A673 (cell line): ENCODE measurements at regions of chr10 and their contacts with region 1.

Region 1: DNA sequence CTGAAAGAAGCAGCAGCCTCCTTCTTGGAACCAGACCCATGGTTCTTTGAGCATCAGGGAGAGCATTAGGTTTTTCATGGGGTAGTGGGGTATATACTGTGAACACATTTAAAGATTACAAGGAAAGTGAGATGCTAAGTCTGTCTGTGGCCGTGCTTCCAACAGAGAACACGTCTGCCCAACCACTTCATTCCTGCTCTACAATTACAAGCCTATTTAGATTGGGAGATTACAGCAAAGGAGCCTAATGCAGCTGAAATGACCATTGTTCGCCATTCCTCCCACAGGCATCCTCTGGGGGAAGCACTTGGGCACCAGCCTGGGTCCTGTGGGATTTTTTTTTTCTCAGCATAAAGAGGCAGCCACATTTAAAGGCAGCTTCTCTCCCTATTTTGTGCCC is 536.4 kb downstream of the XPNPEP1 start:
- DNase-seq: peak; percentile 88
- H3K4me3 ChIP-seq: no peak overlapping the region
- H3K27ac ChIP-seq: peak overlapping the region; percentile 94
- H3K4me1 ChIP-seq: peaks cover 38% of the 10 kb centered on the region
- H3K27me3 ChIP-seq: no peaks in the 10 kb centered on the region
- CTCF ChIP-seq: 0 out of 2 replicates have a peak, but pooled peaks have one; percentile 16

Region 2: GRCh38 chr10:109317746-109318366 is 69.1 kb before region 1 on chr10:
- CTCF ChIA-PET with region 1: no interaction called
- POLR2A ChIA-PET with region 1: no interaction called
- intact Hi-C with region 1: no loop called
- DNase-seq: no peak
- H3K4me3 ChIP-seq: no peak overlapping the region
- H3K27ac ChIP-seq: no peak overlapping the region
- H3K4me1 ChIP-seq: no peaks in the 10 kb centered on the region
- H3K27me3 ChIP-seq: no peaks in the 10 kb centered on the region
- CTCF ChIP-seq: no peak

Region 3: GRCh38 chr10:109427411-109427810 is 40.5 kb after region 1 on chr10:
- CTCF ChIA-PET with region 1: no interaction called
- POLR2A ChIA-PET with region 1: no interaction called
- intact Hi-C with region 1: loop called (anchors 2 kb)
- DNase-seq: peak; percentile 84
- H3K4me3 ChIP-seq: no peak overlapping the region
- H3K27ac ChIP-seq: peak overlapping the region; percentile 75
- H3K4me1 ChIP-seq: peaks cover 82% of the 10 kb centered on the region
- H3K27me3 ChIP-seq: no peaks in the 10 kb centered on the region
- CTCF ChIP-seq: peak; percentile 68

Region 4: GRCh38 chr10:109450702-109451101 is 63.8 kb after region 1 on chr10:
- CTCF ChIA-PET with region 1: interaction called, 3 read pairs
- POLR2A ChIA-PET with region 1: no interaction called
- intact Hi-C with region 1: loop called (anchors 1 kb)
- DNase-seq: peak; percentile 82
- H3K4me3 ChIP-seq: no peak overlapping the region
- H3K27ac ChIP-seq: no peak overlapping the region
- H3K4me1 ChIP-seq: peaks cover 42% of the 10 kb centered on the region
- H3K27me3 ChIP-seq: no peaks in the 10 kb centered on the region
- CTCF ChIP-seq: no peak

Region 5: GRCh38 chr10:109773288-109774120 is 386.6 kb after region 1 on chr10:
- CTCF ChIA-PET with region 1: interaction called, 3 read pairs
- POLR2A ChIA-PET with region 1: no interaction called
- intact Hi-C with region 1: loop called (anchors 2 kb)
- DNase-seq: peak; percentile 71
- H3K4me3 ChIP-seq: no peak overlapping the region
- H3K27ac ChIP-seq: no peak overlapping the region
- H3K4me1 ChIP-seq: peaks cover 17% of the 10 kb centered on the region
- H3K27me3 ChIP-seq: no peaks in the 10 kb centered on the region
- CTCF ChIP-seq: peak; percentile 79

Region 6: GRCh38 chr10:109852475-109853037 is 465.6 kb after region 1 on chr10:
- CTCF ChIA-PET with region 1: no interaction called
- POLR2A ChIA-PET with region 1: no interaction called
- intact Hi-C with region 1: loop called (anchors 2 kb)
- DNase-seq: peak; percentile 89
- H3K4me3 ChIP-seq: no peak overlapping the region
- H3K27ac ChIP-seq: no peak overlapping the region
- H3K4me1 ChIP-seq: peaks cover 3% of the 10 kb centered on the region
- H3K27me3 ChIP-seq: no peaks in the 10 kb centered on the region
- CTCF ChIP-seq: peak; percentile 97

Region 7: DNA sequence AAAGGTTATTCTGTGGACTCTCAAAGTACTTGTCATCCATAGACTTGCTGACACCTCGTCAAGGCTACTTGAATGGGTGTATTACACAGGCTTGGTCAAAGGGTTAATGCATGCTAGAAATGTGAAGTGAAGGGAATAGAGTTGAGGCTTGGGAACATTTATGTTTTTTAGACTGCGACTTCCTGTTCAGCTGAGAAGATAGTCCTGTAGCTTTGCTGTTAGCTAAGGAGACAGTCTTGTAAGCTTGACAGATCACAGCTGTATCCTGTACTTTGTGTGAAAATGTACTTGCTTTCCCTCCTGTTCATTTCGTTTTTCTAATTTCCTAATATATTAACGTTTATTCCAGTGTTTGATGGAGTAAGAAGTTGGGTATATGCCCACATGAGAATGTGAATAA is 673.0 kb after region 1 on chr10:
- CTCF ChIA-PET with region 1: no interaction called
- POLR2A ChIA-PET with region 1: no interaction called
- intact Hi-C with region 1: no loop called
- DNase-seq: peak; percentile 71
- H3K4me3 ChIP-seq: no peak overlapping the region
- H3K27ac ChIP-seq: peak overlapping the region; percentile 39
- H3K4me1 ChIP-seq: peaks cover 69% of the 10 kb centered on the region
- H3K27me3 ChIP-seq: no peaks in the 10 kb centered on the region
- CTCF ChIP-seq: no peak